Activated CD4-positive, alpha-beta T cell treated with anti-CD3 and anti-CD28 coated beads for 36 hours (primary cell): ENCODE measurements at regions of chr1 and their contacts with region 1.

Region 1: GRCh38 chr1:23634842-23635651 is 56.6 kb upstream of the RPL11 start:
- DNase-seq: peak; percentile 69
- ATAC-seq: peak; percentile 87
- H3K4me3 Mint-ChIP-seq: peak overlapping the region; percentile 40
- H3K27ac Mint-ChIP-seq: peak overlapping the region; percentile 79
- H3K4me1 Mint-ChIP-seq: peaks cover 30% of the 10 kb centered on the region
- H3K27me3 Mint-ChIP-seq: no peaks in the 10 kb centered on the region

Region 2: DNA sequence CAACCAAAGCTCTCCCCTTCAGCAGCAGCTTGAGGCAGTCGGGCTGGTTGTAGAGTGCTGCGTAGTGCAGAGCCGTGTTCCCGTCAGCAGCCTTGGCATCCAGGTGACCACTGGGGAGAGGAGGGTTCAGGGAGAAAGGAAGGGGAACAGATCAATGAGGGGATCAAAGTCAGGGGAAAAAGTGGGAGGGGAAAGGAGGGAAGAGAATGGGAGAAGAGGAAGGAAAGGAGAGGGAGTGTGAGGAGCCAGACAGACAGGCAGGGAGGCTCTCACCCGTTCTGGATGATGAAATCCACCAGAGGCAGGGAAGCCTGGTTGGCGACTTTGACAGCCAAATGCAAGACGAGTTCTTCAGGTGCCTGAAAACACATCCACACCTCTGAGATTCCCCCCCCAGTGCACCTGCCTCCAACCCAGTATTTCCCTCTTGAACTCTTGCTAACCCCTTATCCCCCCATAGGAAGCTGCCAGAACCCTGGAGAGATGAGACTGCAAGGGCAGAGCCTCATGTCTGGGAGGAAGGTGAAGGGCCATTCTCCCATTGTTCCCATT is 200.7 kb before region 1 on chr1:
- CTCF ChIA-PET with region 1: no interaction called
- POLR2A ChIA-PET with region 1: no interaction called
- intact Hi-C with region 1: no loop called
- DNase-seq: no peak
- ATAC-seq: no peak
- H3K4me3 Mint-ChIP-seq: no peak overlapping the region
- H3K27ac Mint-ChIP-seq: no peak overlapping the region
- H3K4me1 Mint-ChIP-seq: no peaks in the 10 kb centered on the region
- H3K27me3 Mint-ChIP-seq: no peaks in the 10 kb centered on the region

Region 3: GRCh38 chr1:23496490-23497181 is 138.4 kb before region 1 on chr1:
- CTCF ChIA-PET with region 1: interaction called, 83 read pairs
- POLR2A ChIA-PET with region 1: no interaction called
- intact Hi-C with region 1: loop called (anchors 1 to 5 kb)
- DNase-seq: no peak
- ATAC-seq: peak; percentile 12
- H3K4me3 Mint-ChIP-seq: no peak overlapping the region
- H3K27ac Mint-ChIP-seq: no peak overlapping the region
- H3K4me1 Mint-ChIP-seq: no peaks in the 10 kb centered on the region
- H3K27me3 Mint-ChIP-seq: no peaks in the 10 kb centered on the region

Region 4: DNA sequence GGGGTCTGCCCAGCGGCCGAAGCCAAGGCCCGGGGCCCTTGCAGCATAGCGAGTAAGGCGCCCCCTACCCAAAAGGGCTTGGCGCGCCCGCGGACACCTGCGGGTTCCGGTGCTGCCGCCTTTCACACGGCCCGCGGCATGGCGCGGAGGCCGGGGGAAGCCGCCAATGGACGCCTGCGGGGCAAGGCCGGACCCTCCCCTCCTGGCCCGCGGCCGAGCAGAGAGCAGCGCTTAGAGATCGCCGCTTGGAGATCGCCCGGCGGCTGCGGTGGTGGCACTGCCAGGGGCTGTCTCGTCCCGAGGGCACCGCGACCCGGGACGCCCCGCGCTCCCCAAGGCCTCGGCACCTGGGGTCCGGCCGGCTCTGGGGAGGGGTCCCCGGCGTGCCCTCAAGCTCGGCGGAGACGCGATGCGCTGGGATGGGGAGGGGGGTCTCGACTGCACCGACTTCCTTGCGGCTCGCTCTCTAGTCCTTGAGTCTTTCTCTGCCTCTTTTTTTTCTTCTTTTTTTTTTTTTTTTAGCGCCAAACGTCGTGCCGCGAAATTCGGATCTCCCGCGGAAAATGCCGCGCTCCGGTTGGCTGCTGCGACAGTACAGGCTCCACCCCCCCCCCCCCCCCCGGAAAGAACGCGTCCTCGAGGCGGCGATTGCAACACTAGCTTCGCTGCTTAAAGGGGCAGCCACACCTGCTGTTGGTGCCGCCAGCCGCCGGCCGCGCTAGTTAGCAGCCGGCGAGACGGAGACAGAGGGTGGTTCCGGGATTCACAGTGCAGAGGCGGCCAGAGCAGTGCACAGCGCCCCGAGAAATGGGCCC is 104.1 kb before region 1 on chr1 and contains the start of gene E2F2:
- CTCF ChIA-PET with region 1: interaction called, 82 read pairs
- POLR2A ChIA-PET with region 1: interaction called, 6 read pairs
- intact Hi-C with region 1: no loop called
- DNase-seq: peak; percentile 91
- ATAC-seq: peak; percentile 81
- H3K4me3 Mint-ChIP-seq: peak within 1 kb of the TSS; percentile 84
- H3K27ac Mint-ChIP-seq: peak within 1 kb of the TSS; percentile 95
- H3K4me1 Mint-ChIP-seq: peaks cover 68% of the 10 kb centered on the region
- H3K27me3 Mint-ChIP-seq: no peaks in the 10 kb centered on the region
- total RNA-seq, gene E2F2: 25.0 to 32.0 TPM

Region 5: DNA sequence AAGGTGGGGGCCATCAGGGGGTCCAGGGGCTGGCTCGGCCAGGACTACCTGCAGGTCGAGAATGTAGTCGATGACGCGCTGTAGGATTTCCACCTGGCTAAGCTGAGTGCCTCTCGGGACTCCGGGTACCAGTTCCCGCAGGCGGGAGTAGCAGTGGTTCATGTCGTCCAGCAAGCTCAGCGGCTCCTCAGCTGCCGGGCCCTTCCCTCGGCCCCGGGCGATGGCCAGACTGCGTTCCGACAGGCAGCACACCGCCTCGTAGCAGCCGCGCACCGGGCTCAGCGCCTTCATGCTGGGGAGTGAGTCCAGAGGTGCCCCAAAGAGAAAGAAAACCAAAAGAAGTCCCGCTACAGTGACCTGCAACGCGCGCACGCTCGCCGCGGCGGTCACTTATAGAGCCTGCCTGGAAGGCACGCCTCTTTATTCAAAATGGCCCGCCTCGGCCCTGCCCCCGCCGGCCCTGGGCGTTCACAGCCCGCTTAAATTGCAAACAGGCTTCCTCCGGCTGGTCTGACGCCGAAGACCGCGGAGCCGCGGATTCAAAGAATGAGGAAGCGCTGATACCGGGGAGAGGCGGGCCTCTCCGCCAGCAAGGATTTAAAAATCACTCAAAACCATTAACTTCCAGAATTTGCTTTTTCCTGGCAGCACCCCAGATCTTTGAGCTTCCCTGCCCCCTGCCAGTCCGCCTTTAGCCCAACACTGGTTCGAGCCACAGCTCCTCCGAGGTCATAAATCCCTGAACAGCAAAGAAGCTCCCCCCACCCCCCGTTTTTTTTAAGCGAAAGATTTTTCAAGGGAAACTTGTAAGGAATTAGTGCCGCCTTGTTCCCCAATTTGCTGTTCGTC is 75.7 kb before region 1 on chr1 and contains the start of gene ID3:
- CTCF ChIA-PET with region 1: interaction called, 678 read pairs
- POLR2A ChIA-PET with region 1: interaction called, 5 read pairs
- intact Hi-C with region 1: loop called in 1 of 2 experiments (anchors 2 kb)
- DNase-seq: peak; percentile 96
- ATAC-seq: peak; percentile 71
- H3K4me3 Mint-ChIP-seq: peak within 1 kb of the TSS; percentile 94
- H3K27ac Mint-ChIP-seq: peak within 1 kb of the TSS; percentile 79
- H3K4me1 Mint-ChIP-seq: peaks cover 58% of the 10 kb centered on the region
- H3K27me3 Mint-ChIP-seq: peaks cover 5% of the 10 kb centered on the region
- total RNA-seq, gene ID3: 42.6 to 43.9 TPM

Region 6: DNA sequence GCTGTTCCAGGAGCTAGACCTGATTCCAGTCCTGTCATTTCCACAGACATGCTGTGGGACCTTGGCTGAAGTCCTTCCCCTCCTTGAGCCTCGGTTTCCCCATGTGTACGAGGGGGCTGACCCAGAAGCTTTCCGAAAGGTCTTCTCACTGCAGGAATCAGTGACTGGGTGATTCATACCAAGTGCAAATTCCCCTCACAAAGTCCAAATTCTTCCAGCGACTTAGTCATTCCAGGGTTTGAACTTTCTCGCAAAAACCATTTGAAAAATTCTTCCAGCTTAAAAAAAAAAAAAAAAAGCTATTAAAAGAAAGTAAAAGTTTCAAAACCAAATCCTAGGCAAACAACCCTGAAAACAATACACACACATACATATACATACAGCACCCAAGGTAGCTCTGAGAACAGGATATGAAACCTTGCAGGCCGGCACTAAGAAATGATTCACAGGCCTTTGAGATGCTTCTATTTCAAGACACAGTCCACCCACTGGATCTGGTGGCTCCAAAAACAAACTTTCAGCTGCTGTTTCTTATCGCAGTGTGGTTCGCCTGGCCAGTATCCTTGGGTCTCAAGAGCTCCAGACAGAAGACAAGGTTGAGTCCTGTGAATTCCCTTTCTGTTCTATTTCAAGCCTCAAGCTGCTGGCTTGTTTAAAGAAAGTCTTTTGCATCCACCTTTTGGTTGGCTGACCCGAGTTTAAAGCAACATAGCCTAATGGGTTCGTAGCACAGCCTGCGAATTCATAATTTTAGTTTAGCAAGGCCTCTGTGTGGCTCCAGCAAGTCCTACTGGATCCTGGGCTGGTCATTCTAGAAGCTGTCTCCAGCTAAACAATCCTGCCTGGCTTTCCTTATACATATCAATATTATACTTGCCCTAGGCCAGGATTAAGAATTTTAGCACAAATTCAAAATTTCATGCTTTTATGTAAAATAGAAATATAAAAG is 57.7 kb before region 1 on chr1:
- CTCF ChIA-PET with region 1: interaction called, 28 read pairs
- POLR2A ChIA-PET with region 1: interaction called, 5 read pairs
- intact Hi-C with region 1: no loop called
- DNase-seq: peak; percentile 73
- ATAC-seq: peak; percentile 98
- H3K4me3 Mint-ChIP-seq: peak overlapping the region; percentile 8
- H3K27ac Mint-ChIP-seq: peak overlapping the region; percentile 79
- H3K4me1 Mint-ChIP-seq: peaks cover 47% of the 10 kb centered on the region
- H3K27me3 Mint-ChIP-seq: no peaks in the 10 kb centered on the region

Region 7: GRCh38 chr1:23598424-23598823 is 36.6 kb before region 1 on chr1:
- CTCF ChIA-PET with region 1: interaction called, 10 read pairs
- POLR2A ChIA-PET with region 1: interaction called, 5 read pairs
- intact Hi-C with region 1: no loop called
- DNase-seq: no peak
- ATAC-seq: no peak
- H3K4me3 Mint-ChIP-seq: no peak overlapping the region
- H3K27ac Mint-ChIP-seq: no peak overlapping the region
- H3K4me1 Mint-ChIP-seq: peaks cover 92% of the 10 kb centered on the region
- H3K27me3 Mint-ChIP-seq: no peaks in the 10 kb centered on the region

Region 8: DNA sequence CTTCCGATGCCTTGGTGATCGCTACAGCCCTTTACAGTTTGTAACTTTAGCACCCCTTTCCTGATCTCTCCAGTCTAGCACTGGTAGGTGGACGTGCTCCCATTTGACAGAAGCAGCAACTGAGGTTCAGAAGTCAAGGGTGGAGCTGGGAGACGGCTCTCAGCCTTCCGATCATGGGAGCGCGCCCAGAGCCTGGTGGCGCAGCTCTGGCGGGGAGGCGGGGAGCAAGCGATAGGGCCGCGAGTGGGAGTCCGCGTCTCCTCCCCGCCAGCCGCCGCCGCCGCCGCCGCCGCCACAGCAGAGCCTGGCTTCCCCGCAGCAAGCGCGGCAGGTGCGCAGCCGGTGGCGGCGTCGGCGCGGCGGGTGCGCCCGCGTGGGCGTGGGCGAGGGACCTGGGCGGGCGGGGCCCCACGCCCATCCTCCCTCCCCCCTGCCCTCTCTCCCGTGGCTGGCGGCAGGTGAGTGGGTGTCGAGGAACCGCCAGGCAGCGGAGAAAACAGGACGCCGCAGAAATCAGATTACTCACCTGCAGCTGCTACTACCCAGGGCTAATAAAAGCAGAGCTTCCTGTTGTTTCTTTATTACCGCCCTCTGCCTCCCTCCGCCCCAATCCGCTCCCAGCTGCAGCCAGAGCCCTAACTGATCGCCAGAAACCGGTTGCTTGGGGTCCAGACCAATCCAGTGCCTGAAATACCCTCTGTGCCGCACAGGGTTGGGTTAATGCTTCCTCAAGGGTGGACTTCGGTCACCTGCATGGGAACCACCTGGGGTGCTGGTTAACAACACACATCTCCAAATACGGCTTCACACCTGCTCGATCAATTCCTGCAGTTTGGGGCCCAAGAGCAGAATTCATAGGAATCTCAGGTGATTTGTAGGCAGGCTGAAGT is 15.5 kb before region 1 on chr1:
- CTCF ChIA-PET with region 1: interaction called, 21 read pairs
- POLR2A ChIA-PET with region 1: no interaction called
- intact Hi-C with region 1: no loop called
- DNase-seq: peak; percentile 90
- ATAC-seq: peak; percentile 68
- H3K4me3 Mint-ChIP-seq: peak overlapping the region; percentile 60
- H3K27ac Mint-ChIP-seq: peak overlapping the region; percentile 79
- H3K4me1 Mint-ChIP-seq: peaks cover 89% of the 10 kb centered on the region
- H3K27me3 Mint-ChIP-seq: no peaks in the 10 kb centered on the region